Astrocyte of the cerebellum (primary cell): ENCODE measurements at regions of chr12 and their contacts with region 1.

Region 1: GRCh38 chr12:50400598-50401364 is at the start of gene LARP4:
- DNase-seq: peak; percentile 85
- H3K4me3 ChIP-seq: peak within 1 kb of the TSS; percentile 92
- CTCF ChIP-seq: no peak

Region 2: DNA sequence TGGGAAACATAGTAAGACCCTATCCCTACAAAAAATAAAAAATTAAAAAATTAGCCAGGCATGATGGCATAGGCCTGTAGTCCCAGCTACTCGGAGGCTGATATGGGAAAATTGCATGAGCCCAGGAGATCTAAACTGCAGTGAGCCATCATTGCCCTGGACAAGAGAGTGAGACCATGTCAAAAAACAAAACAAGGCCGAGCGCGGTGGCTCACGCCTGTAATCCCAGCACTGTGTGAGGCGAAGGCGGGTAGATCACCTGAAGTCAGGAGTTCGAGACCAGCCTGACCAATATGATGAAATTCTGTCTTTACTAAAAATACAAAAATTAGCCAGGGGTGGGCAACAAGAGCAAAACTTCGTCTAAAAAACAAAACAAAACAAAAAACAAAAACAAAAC is 56.0 kb before region 1 on chr12:
- in situ Hi-C with region 1: loop called (anchors 5 kb)
- DNase-seq: no peak
- H3K4me3 ChIP-seq: no peak overlapping the region
- CTCF ChIP-seq: no peak

Region 3: DNA sequence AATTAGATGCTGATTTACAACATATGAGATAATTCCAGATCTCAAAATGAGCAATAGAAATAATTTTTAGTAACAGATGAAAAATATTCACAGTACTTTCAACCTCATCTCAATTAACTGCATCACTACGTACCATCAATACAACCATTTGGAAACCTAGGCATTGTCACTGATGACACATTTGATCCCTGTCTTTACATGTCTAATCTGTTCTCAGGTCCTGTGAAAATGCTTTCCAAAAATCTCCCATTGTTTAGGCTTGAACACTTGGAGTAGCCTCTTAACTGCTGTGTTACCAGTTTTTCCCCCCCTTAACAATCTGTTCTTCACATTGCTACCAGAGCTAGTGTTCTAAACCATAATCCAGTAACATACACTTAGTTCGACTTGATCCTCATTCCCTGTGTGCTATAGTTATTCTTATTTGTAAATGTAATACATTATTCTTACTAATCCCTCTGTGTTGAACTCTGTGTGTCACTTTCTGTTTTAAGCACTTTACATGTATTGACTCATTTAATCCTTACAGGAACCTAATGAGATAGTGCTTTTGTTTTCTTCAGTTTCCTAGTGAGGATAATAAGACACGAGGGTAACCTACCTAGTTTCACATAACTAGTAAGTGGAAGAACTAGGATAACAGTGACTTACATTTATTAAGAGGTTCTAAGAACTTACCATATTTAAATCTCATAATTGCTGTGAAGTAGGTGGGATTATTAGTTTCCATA is 41.6 kb after region 1 on chr12:
- in situ Hi-C with region 1: loop called (anchors 5 kb)
- DNase-seq: no peak
- H3K4me3 ChIP-seq: no peak overlapping the region
- CTCF ChIP-seq: no peak